Heart left ventricle (tissue), 16 donors: ENCODE measurements at regions of chr16 and their contacts with region 1.

Region 1: DNA sequence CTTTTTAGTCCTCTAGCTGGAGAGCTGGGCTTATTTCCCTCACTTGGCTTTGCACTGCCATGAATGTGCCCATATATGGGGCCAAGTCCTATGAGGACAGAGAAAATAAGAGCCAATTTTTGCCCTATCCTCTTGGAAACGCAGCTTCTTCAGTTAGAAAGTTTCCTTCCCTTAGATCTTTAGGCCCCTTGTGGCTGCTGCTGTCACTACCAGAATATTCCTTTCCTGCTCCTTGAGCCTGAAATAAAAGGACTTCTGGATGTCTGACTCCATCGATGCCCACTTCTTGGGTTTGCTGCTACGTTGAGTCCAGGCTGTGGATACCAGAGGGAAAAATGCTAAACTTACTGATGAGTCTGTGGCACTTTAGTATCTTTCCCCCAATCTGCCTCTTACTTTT is 487.1 kb downstream of the GRIN2A start:
- DNase-seq: no peak
- ATAC-seq: no peak
- H3K4me3 ChIP-seq: no peak overlapping the region
- H3K27ac ChIP-seq: no peak overlapping the region
- H3K4me1 ChIP-seq: no peaks in the 10 kb centered on the region
- H3K27me3 ChIP-seq: peaks cover 0 to 15% (median 0%) of the 10 kb centered on the region in 9 donors
- CTCF ChIP-seq: no peak
- POLR2A ChIP-seq: no peak

Region 2: GRCh38 chr16:9644258-9644657 is 50.9 kb before region 1 on chr16:
- intact Hi-C with region 1: no loop called
- DNase-seq: no peak
- ATAC-seq: no peak
- H3K4me3 ChIP-seq: no peak overlapping the region
- H3K27ac ChIP-seq: no peak overlapping the region
- H3K4me1 ChIP-seq: no peaks in the 10 kb centered on the region
- H3K27me3 ChIP-seq: no peaks in the 10 kb centered on the region
- CTCF ChIP-seq: no peak
- POLR2A ChIP-seq: no peak

Region 3: DNA sequence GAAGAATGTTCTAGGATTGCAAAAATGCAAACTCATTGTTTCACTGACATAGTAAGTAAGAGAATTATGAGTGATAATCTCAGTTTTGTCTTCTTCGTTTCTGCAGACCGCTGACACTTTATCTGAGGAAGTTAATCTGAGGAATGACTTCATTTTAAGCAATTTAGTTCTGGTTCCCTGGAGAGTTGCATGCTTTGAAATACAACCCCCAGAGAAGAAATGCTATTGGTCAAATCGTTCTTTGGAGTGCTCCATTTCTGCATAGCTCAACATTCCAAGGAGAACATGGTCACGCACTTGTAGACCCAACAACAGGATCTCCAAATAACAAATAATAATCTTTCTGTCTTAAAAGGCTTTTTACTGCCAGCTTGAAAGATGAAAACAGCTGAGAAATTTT is 59.9 kb after region 1 on chr16:
- intact Hi-C with region 1: loop called in 1 of 10 experiments (anchors 10 kb)
- DNase-seq: no peak
- ATAC-seq: no peak
- H3K4me3 ChIP-seq: no peak overlapping the region
- H3K27ac ChIP-seq: no peak overlapping the region
- H3K4me1 ChIP-seq: peaks cover 0 to 5% (median 0%) of the 10 kb centered on the region in 12 donors
- H3K27me3 ChIP-seq: no peaks in the 10 kb centered on the region
- CTCF ChIP-seq: no peak
- POLR2A ChIP-seq: no peak